Activated T-helper 2 cell treated with anti-CD3 and anti-CD28 coated beads, Interferon-gamma antibody, Interleukin-2, Interleukin-4, amounts not matched to agents 10 μg/mL and 5 μg/mL and 100 μg/mL, durations not matched to agents 14 hours and 24 hours and 36 hours (primary cell): ENCODE measurements at regions of chr10 and their contacts with region 1.

Region 1: DNA sequence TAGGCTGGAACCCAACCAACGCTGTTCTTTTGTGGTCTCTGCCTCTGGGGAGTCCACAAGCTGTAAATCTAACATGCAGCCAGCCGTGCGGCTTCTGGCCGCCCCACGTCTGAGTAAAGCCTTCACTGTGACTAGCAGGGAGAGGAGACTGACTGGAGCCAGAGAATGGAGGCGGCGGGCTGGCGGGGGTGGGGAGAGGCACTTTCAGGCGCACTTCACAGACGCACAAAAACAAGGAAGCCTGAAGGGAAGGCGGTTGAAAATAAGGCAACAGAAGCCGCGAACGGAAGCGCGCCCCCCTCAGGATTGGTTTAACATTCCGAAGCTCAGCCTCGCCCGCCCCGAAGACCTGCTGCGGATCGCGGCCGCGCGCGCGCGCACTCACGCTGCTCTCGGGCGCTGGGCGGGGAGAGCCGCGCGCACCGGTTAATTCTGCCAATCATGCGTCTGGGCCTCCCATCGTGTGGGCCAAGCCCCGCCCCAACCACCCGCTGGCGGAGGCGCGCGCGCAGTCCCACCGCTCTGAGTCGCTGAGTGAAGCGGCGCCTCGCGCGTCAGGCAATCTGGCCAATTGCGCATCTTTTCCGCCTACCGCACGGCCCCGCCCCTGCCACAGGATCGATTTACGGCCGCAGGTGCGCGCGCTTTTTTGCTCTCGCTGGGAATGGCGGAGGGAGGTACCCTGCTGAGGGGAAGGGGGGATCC is at the start of gene SFR1:
- DNase-seq: peak; percentile 99
- H3K4me3 Mint-ChIP-seq: peak within 1 kb of the TSS; percentile 90
- H3K27ac Mint-ChIP-seq: peak within 1 kb of the TSS; percentile 99
- H3K4me1 Mint-ChIP-seq: peaks cover 40% of the 10 kb centered on the region
- H3K27me3 Mint-ChIP-seq: peaks cover 11% of the 10 kb centered on the region
- total RNA-seq, gene SFR1: 11.7 and 12.0 TPM in 2 replicates

Region 2: GRCh38 chr10:103888113-103888841 is 233.4 kb before region 1 on chr10:
- intact Hi-C with region 1: loop called (anchors 1 kb)
- DNase-seq: no peak
- H3K4me3 Mint-ChIP-seq: no peak overlapping the region
- H3K27ac Mint-ChIP-seq: peak overlapping the region; percentile 57
- H3K4me1 Mint-ChIP-seq: peaks cover 38% of the 10 kb centered on the region
- H3K27me3 Mint-ChIP-seq: no peaks in the 10 kb centered on the region

Region 3: DNA sequence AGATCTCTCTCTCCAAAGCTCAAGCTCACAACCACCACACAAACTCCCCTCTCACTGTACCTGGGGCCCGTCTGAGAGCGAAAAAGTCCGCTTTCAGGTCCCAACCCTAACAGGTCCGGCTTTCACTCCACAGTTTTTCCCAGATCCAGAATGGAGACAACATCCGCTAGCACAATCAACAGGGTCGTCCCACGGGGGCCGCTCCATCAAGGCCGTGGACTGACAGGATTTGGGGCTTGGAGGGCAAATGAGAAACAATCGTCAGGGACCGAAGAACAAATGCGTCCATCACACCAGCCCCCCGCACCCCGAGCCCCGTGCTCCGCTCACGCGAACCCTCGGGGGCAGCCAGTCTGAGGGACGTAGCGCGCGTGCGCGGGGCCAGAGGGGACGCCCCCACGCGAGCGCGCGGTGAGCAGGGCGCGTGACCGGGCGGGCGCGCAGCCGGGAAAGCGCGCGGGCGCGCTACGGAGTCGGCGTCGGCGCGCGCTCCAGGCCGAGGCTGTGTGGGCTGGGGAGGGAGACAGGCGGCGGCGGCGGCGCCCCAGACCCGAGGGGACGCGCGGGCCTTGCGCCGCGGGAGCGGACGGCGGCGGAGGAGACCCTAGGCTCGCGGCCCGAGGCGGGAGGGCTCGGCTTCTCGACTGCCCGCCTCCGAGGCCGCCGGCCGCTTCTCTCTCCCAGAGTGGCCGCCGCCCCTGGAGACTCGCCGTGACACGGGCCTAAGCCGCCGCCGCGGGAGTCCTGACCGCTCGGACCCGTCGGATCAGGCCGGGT is 154.8 kb before region 1 on chr10 and contains the start of gene SLK:
- intact Hi-C with region 1: loop called (anchors 1 kb)
- DNase-seq: peak; percentile 81
- H3K4me3 Mint-ChIP-seq: peak within 1 kb of the TSS; percentile 94
- H3K27ac Mint-ChIP-seq: peak within 1 kb of the TSS; percentile 95
- H3K4me1 Mint-ChIP-seq: peaks cover 28% of the 10 kb centered on the region
- H3K27me3 Mint-ChIP-seq: no peaks in the 10 kb centered on the region
- total RNA-seq, gene SLK: 25.2 and 26.7 TPM in 2 replicates

Region 4: DNA sequence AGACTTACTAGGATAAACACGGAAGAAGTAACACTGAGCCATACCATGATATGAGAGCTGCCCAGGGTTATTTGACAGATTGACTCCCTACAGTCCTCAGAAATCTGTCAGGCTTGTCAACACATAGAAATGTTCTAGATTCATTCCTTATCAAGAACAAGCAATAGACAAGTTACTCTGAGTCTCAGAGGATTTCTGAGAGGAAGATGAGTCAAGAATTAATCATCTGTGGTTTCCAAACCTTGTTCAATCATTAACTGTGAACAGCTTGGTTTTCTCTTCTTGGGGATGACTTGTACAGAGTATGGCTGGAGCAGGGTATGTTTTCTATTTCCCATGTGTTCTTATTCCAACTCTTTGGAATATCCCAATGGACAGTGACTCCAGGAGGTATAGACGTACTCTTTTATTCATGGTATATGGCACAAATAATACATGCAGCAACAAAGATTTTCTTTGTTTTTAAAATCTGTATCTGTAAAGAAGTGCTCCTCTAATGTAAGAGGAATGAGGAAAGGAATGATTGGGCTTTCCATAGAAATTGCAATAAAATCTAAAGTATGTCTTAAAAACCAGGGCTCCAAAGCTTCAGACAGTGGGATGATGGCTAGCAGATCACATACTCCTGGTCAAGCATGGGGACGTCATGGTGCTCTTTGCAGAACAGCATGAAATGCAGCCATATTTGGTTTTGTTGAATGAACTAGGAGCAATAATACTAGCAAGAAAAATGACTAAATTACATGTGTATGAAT is 11.6 kb before region 1 on chr10:
- intact Hi-C with region 1: loop called (anchors 1 kb)
- DNase-seq: no peak
- H3K4me3 Mint-ChIP-seq: no peak overlapping the region
- H3K27ac Mint-ChIP-seq: no peak overlapping the region
- H3K4me1 Mint-ChIP-seq: peaks cover 19% of the 10 kb centered on the region
- H3K27me3 Mint-ChIP-seq: peaks cover 9% of the 10 kb centered on the region

Region 5: DNA sequence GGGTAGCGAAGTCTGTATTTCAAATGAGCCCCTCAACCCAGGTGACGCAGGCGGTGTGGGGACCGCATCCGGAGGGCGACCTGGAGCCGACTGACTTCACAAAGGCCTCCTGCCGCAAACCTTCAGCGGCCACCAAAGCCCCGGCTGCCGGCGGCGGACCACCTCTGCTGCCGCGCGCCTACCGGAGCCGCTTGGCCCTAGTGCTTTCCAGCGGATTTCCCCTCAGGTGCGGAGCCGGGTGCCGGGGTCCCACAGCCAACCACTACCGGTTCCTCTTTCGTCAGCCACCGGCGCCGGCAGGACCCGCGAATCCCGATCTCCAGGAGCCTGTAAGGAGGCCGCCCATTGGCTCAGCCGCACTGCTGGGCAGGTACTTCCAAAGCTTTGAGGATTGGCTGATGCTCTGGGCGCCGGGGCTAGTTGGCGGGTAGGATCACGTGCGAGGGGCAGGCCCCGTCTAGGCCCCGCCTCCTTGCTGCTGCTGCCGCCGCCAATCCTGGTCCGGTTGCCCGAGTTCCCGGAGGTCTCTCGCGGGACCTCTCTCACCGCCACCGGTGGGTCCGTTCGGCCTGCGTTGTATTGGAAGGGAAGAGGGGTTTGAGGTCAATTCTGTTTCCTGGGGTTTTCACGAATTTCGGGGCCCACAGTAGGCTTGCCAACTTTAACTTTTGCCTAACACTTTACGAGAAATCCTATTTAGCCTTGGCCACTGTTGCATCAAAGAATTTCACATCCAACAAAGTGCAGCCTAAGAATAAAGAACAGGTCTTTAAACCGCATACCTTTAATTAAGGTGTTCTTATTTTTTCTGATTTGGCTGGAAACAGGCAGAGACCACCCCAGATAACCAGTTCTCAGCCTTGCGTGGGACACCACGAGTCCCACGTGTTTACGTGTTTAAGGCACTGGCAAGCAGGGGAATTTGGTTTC is 147.3 kb after region 1 on chr10 and contains the start of gene GSTO2:
- intact Hi-C with region 1: loop called (anchors 2 kb)
- DNase-seq: peak; percentile 98
- H3K4me3 Mint-ChIP-seq: peak within 1 kb of the TSS; percentile 92
- H3K27ac Mint-ChIP-seq: peak within 1 kb of the TSS; percentile 92
- H3K4me1 Mint-ChIP-seq: peaks cover 36% of the 10 kb centered on the region
- H3K27me3 Mint-ChIP-seq: no peaks in the 10 kb centered on the region
- total RNA-seq, gene GSTO2: 0.57 and 1.4 TPM in 2 replicates